ENCODE measurements at regions of chr15 and their contacts with region 1.

Region 1: DNA sequence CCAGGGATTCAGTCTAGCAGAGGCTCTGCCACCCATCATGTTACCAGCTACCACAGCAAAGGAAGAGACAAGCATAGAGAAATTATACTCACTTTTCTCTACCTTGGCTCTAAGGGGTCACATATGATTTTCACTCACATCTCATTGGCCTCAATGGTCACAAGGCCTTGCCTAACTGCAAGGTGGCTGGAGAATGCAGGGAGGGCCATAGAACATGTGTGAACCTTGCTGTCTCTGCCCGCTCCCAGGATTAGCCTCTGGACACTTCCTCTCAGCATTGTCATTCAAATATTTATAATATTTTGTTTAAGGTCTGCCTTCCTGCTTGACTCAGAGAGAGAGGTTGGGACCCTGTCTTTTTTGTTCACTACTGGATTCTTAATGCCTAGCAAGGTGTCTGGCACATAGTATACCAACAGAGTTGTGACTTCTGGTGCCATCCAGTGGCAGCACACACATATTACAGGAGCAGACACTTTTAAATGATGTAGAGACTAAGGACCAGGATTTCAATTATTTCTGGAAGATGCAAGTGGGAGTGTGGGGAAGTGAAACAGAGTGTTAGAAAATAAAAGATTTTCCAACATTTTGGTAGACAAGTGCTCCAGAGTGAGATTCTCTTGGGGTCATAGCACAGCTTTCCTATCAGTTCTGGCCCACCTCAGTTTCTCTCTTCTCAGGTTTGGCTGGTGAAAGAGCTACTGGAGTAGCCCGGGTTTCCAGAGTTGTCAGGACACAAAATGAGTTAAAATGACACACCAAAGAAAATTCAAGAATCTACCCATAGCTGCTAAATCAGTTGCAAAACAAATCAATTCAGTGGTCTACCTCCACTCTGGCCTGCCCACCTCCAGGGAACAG is 119.0 kb upstream of the RASGRP1 start:
- DNase-seq: peak; percentile 43 to 79 (median 71)
- ATAC-seq: peak; percentile 76
- H3K4me3 ChIP-seq: peak overlapping the region; percentile 22
- H3K4me3 Mint-ChIP-seq: peak overlapping the region; percentile 1 to 76 (median 55)
- H3K27ac ChIP-seq: peak overlapping the region; percentile 74
- H3K27ac Mint-ChIP-seq: peak overlapping the region; percentile 83 to 99 (median 95)
- H3K4me1 ChIP-seq: peaks cover 62 to 63% of the 10 kb centered on the region in 2 donors
- H3K4me1 Mint-ChIP-seq: peaks cover 53 to 90% (median 84%) of the 10 kb centered on the region in 7 donors
- H3K27me3 ChIP-seq: no peaks in the 10 kb centered on the region
- H3K27me3 Mint-ChIP-seq: no peaks in the 10 kb centered on the region

Region 2: GRCh38 chr15:38164061-38164460 is 519.6 kb before region 1 on chr15:
- CTCF ChIA-PET with region 1: no interaction called
- POLR2A ChIA-PET with region 1: no interaction called
- intact Hi-C with region 1: no loop called
- DNase-seq: no peak
- ATAC-seq: no peak
- H3K4me3 ChIP-seq: no peak overlapping the region
- H3K4me3 Mint-ChIP-seq: no peak overlapping the region
- H3K27ac ChIP-seq: no peak overlapping the region
- H3K27ac Mint-ChIP-seq: no peak overlapping the region
- H3K4me1 ChIP-seq: no peaks in the 10 kb centered on the region
- H3K4me1 Mint-ChIP-seq: no peaks in the 10 kb centered on the region
- H3K27me3 ChIP-seq: no peaks in the 10 kb centered on the region
- H3K27me3 Mint-ChIP-seq: peaks cover 10 to 46% (median 17%) of the 10 kb centered on the region in 5 donors

Region 3: GRCh38 chr15:38474155-38474757 is 209.4 kb before region 1 on chr15:
- CTCF ChIA-PET with region 1: interaction called, 17 read pairs
- POLR2A ChIA-PET with region 1: interaction called, 16 read pairs
- intact Hi-C with region 1: loop called in 1 of 2 experiments (anchors 1 kb)
- DNase-seq: peak in 7 of 9 donors; percentile 53 to 75 (median 62)
- ATAC-seq: peak; percentile 100
- H3K4me3 ChIP-seq: no peak overlapping the region
- H3K4me3 Mint-ChIP-seq: peak overlapping the region in 2 of 10 donors; percentile 4 to 10
- H3K27ac ChIP-seq: no peak overlapping the region
- H3K27ac Mint-ChIP-seq: peak overlapping the region; percentile 10 to 88 (median 81)
- H3K4me1 ChIP-seq: peaks cover 0 to 5% of the 10 kb centered on the region in 2 donors
- H3K4me1 Mint-ChIP-seq: peaks cover 10 to 23% (median 13%) of the 10 kb centered on the region in 7 donors
- H3K27me3 ChIP-seq: no peaks in the 10 kb centered on the region
- H3K27me3 Mint-ChIP-seq: no peaks in the 10 kb centered on the region

Region 4: DNA sequence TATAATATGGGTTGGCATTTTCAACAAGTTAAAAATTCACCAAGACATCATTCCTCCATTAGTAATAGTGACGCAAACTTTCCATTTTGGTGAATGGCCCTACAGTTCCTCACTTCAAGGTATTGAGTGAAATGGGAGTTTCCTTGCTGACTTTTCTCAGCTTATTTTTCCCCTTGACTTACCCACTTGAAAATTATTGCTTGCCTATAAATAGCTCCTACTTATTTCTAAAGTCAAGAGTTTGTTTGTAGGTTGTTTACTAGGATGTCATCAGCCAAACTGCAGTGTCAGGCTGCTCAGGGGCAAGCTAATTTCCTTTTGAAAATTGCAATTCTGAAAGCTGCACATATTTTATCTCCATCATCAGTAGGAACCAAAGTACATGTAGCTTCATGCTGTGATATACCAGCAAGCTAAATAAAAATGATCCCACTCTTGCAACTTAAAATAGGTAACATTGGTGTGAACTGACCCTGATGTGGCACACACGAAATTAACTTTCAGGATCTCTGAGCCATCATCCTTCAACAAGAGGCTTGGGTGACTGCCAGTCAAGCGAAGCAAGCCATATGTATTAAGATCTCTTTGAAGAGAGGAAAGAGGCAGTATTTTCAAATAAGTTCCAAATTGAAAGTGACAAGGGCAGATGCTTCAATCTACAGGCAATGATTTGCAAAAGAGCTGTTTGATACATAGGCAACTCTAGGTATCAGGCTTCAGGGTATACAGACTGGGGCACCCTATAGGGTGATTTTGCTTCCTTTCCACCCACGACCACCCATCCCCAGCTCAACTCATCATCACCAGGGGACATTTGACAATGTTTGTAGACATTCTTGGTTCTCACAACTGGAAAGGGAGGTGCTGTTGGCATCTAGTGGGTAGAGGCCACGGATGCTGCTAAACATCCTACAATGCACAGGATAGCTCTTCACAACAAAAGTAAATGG is 52.2 kb before region 1 on chr15:
- CTCF ChIA-PET with region 1: interaction called, 9 read pairs
- POLR2A ChIA-PET with region 1: interaction called, 5 read pairs
- intact Hi-C with region 1: loop called in 1 of 2 experiments (anchors 10 kb)
- DNase-seq: peak in 3 of 9 donors; percentile 18 to 29 (median 28)
- ATAC-seq: no peak
- H3K4me3 ChIP-seq: peak overlapping the region; percentile 9
- H3K4me3 Mint-ChIP-seq: peak overlapping the region in 9 of 10 donors; percentile 12 to 67 (median 32)
- H3K27ac ChIP-seq: peak overlapping the region; percentile 22
- H3K27ac Mint-ChIP-seq: peak overlapping the region; percentile 60 to 92 (median 77)
- H3K4me1 ChIP-seq: peaks cover 3 to 20% of the 10 kb centered on the region in 2 donors
- H3K4me1 Mint-ChIP-seq: peaks cover 20 to 45% (median 41%) of the 10 kb centered on the region in 7 donors
- H3K27me3 ChIP-seq: no peaks in the 10 kb centered on the region
- H3K27me3 Mint-ChIP-seq: no peaks in the 10 kb centered on the region

Region 5: DNA sequence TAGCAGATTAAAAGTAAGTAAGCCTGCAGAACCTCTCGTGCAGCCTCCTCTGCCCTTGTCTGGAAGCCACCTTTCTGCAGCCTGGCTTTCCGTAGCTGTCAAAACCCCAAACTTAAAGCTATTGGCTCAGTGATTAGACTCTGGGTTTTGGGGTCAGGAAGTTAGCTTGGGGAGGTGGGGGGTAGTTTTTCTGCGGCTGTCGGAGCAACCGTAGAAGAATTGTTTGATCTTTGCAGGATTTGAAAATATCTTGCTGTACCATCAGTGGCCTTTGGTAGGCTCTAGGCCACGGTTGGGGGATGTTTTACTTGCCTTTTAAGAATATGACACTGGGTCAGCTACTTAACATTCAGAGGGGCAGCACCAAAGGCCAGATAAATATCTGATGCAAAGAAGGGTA is 30.6 kb before region 1 on chr15:
- CTCF ChIA-PET with region 1: interaction called, 241 read pairs
- POLR2A ChIA-PET with region 1: interaction called, 231 read pairs
- intact Hi-C with region 1: loop called (anchors 1 kb)
- DNase-seq: peak; percentile 22 to 94 (median 93)
- ATAC-seq: peak; percentile 86
- H3K4me3 ChIP-seq: peak overlapping the region; percentile 45
- H3K4me3 Mint-ChIP-seq: peak overlapping the region; percentile 79 to 92 (median 84)
- H3K27ac ChIP-seq: peak overlapping the region; percentile 70
- H3K27ac Mint-ChIP-seq: peak overlapping the region; percentile 93 to 99 (median 96)
- H3K4me1 ChIP-seq: peaks cover 57 to 70% of the 10 kb centered on the region in 2 donors
- H3K4me1 Mint-ChIP-seq: peaks cover 41 to 93% (median 89%) of the 10 kb centered on the region in 7 donors
- H3K27me3 ChIP-seq: no peaks in the 10 kb centered on the region
- H3K27me3 Mint-ChIP-seq: no peaks in the 10 kb centered on the region

Region 6: GRCh38 chr15:38660738-38661137 is 22.9 kb before region 1 on chr15:
- CTCF ChIA-PET with region 1: interaction called, 25 read pairs
- POLR2A ChIA-PET with region 1: interaction called, 231 read pairs
- intact Hi-C with region 1: no loop called
- DNase-seq: peak in 2 of 9 donors; percentile 27 to 29
- ATAC-seq: peak; percentile 65
- H3K4me3 ChIP-seq: no peak overlapping the region
- H3K4me3 Mint-ChIP-seq: peak overlapping the region; percentile 5 to 84 (median 70)
- H3K27ac ChIP-seq: peak overlapping the region; percentile 56
- H3K27ac Mint-ChIP-seq: peak overlapping the region; percentile 56 to 94 (median 88)
- H3K4me1 ChIP-seq: peaks cover 17 to 53% of the 10 kb centered on the region in 2 donors
- H3K4me1 Mint-ChIP-seq: peaks cover 50 to 94% (median 83%) of the 10 kb centered on the region in 7 donors
- H3K27me3 ChIP-seq: no peaks in the 10 kb centered on the region
- H3K27me3 Mint-ChIP-seq: no peaks in the 10 kb centered on the region

Region 7: DNA sequence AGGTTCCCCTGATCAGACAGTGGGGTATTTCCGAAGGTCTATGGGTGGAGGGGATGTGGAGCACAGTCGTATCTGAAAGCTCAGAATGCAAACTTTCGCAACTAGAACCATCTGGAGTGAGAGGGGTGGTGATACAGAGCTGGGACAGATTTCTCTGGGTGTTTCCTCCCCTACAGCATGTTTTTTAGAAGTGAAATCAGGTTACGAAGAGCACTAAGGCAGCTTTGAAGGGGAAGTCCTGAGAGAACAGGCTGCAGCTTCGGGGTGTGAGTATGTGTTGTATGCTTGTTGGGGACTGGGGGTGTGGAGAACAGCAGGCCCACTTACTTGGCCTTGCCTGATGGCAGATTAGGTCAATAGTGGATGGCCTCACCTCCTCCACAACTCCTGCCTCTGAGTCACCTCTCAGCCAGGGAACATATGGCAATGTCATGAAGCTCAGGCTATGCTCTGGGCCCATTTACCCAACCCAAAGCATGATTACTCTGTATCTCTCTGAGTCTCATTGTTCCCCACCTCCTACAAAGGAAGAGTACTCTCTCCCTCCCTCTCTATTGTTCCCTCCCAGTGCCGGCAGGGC is 11.8 kb before region 1 on chr15:
- CTCF ChIA-PET with region 1: interaction called, 139 read pairs
- POLR2A ChIA-PET with region 1: interaction called, 91 read pairs
- intact Hi-C with region 1: loop called (anchors 1 kb)
- DNase-seq: peak in 8 of 9 donors; percentile 55 to 84 (median 66)
- ATAC-seq: peak; percentile 79
- H3K4me3 ChIP-seq: peak overlapping the region; percentile 28
- H3K4me3 Mint-ChIP-seq: peak overlapping the region; percentile 27 to 86 (median 70)
- H3K27ac ChIP-seq: peak overlapping the region; percentile 90
- H3K27ac Mint-ChIP-seq: peak overlapping the region; percentile 93 to 100 (median 98)
- H3K4me1 ChIP-seq: peaks cover 73 to 74% of the 10 kb centered on the region in 2 donors
- H3K4me1 Mint-ChIP-seq: peaks cover 47 to 88% (median 80%) of the 10 kb centered on the region in 7 donors
- H3K27me3 ChIP-seq: no peaks in the 10 kb centered on the region
- H3K27me3 Mint-ChIP-seq: no peaks in the 10 kb centered on the region

Measured in naive thymus-derived CD4-positive, alpha-beta T cell (primary cell).